ENCODE measurements at regions of chr12 and their contacts with region 1.

Region 1: GRCh38 chr12:31259136-31259886 is 66.6 kb downstream of the SINHCAF start:
- DNase-seq: no peak
- H3K4me3 ChIP-seq: no peak overlapping the region
- H3K27ac ChIP-seq: no peak overlapping the region
- H3K4me1 ChIP-seq: peaks cover 0 to 7% (median 2%) of the 10 kb centered on the region in 4 experiments; a peak in 5 of 7 replicates
- H3K27me3 ChIP-seq: no peaks in the 10 kb centered on the region
- CTCF ChIP-seq: no peak
- EP300 ChIP-seq: no peak
- POLR2A ChIP-seq: no peak
- RAD21 ChIP-seq: no peak

Region 2: GRCh38 chr12:31245822-31246469 is 13.4 kb before region 1 on chr12:
- CTCF ChIA-PET with region 1: interaction called, 108 read pairs
- POLR2A ChIA-PET with region 1: no interaction called
- DNase-seq: no peak
- H3K4me3 ChIP-seq: no peak overlapping the region
- H3K27ac ChIP-seq: no peak overlapping the region
- H3K4me1 ChIP-seq: peaks cover 0 to 7% (median 2%) of the 10 kb centered on the region in 4 experiments; a peak in 2 of 7 replicates
- H3K27me3 ChIP-seq: no peaks in the 10 kb centered on the region
- CTCF ChIP-seq: peak; percentile 22 to 98 (median 66)
- EP300 ChIP-seq: no peak
- POLR2A ChIP-seq: no peak
- RAD21 ChIP-seq: peak; percentile 79 to 87

Region 3: GRCh38 chr12:31274520-31275300 is 15.4 kb after region 1 on chr12:
- CTCF ChIA-PET with region 1: interaction called, 31 read pairs
- POLR2A ChIA-PET with region 1: interaction called, 5 read pairs
- DNase-seq: no peak
- H3K4me3 ChIP-seq: no peak overlapping the region
- H3K27ac ChIP-seq: no peak overlapping the region
- H3K4me1 ChIP-seq: no peaks in the 10 kb centered on the region; a peak in 2 of 7 replicates
- H3K27me3 ChIP-seq: no peaks in the 10 kb centered on the region
- CTCF ChIP-seq: no peak
- EP300 ChIP-seq: no peak
- POLR2A ChIP-seq: no peak
- RAD21 ChIP-seq: no peak

Region 4: DNA sequence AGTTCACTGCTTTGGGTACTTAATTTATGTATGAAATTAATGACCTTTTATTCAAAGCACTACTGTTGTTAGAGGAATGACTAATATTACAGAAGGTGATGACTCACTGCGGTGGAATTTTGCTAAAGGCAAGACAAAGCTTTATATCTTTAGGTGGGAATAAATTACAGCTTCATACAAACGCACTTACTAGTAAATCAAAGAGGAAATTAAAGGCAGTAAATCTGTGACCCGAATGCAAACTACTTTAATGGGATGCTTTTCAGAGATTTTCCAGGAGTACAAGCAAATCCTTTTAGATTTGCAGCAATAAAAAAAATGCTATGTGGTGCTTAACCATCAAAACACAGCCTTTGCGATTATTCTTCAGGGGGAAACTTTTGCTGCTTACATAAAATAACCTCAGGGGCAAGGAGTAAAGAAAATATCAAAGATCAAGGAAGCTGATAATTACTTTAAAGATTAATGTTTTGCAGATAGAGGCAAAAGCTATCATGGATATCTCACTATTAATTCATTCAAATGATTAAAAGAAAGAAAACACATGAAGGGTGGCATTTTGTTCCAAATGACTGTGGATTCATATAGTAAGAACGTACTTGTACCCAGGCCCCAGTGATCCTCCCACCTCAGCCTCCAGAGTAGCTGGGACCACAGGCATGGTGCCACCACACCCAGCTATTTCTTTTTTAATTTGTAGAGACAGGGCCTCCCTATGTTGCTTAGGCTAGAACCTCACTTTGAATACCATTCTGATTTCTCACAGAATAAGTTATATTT is 232.7 kb after region 1 on chr12:
- CTCF ChIA-PET with region 1: no interaction called
- POLR2A ChIA-PET with region 1: no interaction called
- DNase-seq: no peak
- H3K4me3 ChIP-seq: no peak overlapping the region
- H3K27ac ChIP-seq: no peak overlapping the region
- H3K4me1 ChIP-seq: peaks cover 0 to 5% (median 0%) of the 10 kb centered on the region in 4 experiments; a peak in 2 of 7 replicates
- H3K27me3 ChIP-seq: no peaks in the 10 kb centered on the region
- CTCF ChIP-seq: no peak
- EP300 ChIP-seq: no peak
- POLR2A ChIP-seq: no peak
- RAD21 ChIP-seq: no peak

Measured in H1 (cell line).